ENCODE measurements at regions of chr4 and their contacts with region 1.

Region 1: GRCh38 chr4:74228691-74229640 is 71.0 kb downstream of the MTHFD2L start:
- DNase-seq: peak; percentile 97
- ATAC-seq: peak; percentile 51
- H3K4me3 ChIP-seq: no peak overlapping the region
- H3K27ac ChIP-seq: peak overlapping the region; percentile 92
- H3K4me1 ChIP-seq: peaks cover 52% of the 10 kb centered on the region
- H3K27me3 ChIP-seq: no peaks in the 10 kb centered on the region
- CTCF ChIP-seq: peak; percentile 99

Region 2: DNA sequence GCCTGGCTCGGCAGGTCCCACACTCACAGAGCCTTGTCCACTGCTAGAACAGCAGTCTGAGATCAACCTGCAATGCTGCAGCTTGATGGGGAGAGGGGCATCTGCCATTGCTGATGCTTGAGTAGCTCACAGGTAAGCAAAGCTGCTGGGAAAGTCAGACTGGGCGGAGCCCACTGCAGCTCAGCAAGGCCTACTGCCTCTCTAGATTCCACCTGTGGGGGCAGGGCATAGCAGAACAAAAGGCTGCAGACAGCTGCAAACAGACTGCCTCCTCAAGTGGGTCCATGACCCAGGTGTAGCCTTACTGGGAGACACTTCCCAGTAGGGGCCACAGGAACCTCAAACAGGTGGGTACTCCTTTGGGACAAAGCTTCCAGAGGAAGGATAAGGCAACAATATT is 1549.3 kb before region 1 on chr4:
- CTCF ChIA-PET with region 1: no interaction called
- POLR2A ChIA-PET with region 1: no interaction called
- intact Hi-C with region 1: no loop called
- DNase-seq: no peak
- ATAC-seq: no peak
- H3K4me3 ChIP-seq: no peak overlapping the region
- H3K27ac ChIP-seq: no peak overlapping the region
- H3K4me1 ChIP-seq: no peaks in the 10 kb centered on the region
- H3K27me3 ChIP-seq: 0 out of 2 replicates have a peak, but pooled peaks cover 8% of the 10 kb centered on the region
- CTCF ChIP-seq: no peak

Region 3: GRCh38 chr4:74189331-74190043 is 39.5 kb before region 1 on chr4:
- CTCF ChIA-PET with region 1: no interaction called
- POLR2A ChIA-PET with region 1: no interaction called
- intact Hi-C with region 1: loop called (anchors 1 kb)
- DNase-seq: peak; percentile 79
- ATAC-seq: peak; percentile 65
- H3K4me3 ChIP-seq: no peak overlapping the region
- H3K27ac ChIP-seq: peak overlapping the region; percentile 17
- H3K4me1 ChIP-seq: peaks cover 19% of the 10 kb centered on the region
- H3K27me3 ChIP-seq: no peaks in the 10 kb centered on the region
- CTCF ChIP-seq: peak; percentile 91

Region 4: DNA sequence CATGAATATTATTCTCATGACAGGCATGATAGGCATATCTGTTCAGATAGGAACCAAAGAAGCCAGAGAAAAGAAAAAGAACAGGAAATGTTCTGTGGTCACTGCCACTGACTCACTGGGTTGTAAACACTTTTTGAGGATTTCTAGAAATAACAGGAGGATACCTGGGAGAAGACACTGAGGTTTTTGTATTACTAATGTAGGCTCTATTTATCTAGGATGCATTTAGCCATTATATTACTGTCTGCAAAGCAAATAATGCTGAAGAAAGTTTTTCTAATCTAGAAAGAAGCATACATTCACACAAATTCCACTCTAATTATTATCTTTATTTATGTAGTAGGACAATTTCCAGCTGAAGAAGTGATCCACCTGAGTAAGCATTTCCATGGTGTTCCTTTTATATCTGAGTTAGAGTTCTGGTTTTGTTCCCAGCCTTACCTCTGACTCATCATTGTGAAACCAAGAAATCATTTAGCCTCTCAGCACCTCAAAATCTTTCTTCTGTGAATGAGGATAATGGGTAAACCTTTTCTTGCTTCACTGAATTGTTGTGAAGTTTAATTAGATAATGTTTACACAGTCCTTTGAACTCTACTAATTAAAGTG is 39.1 kb after region 1 on chr4:
- CTCF ChIA-PET with region 1: interaction called, 3 read pairs
- POLR2A ChIA-PET with region 1: no interaction called
- intact Hi-C with region 1: loop called (anchors 1 kb)
- DNase-seq: peak; percentile 94
- ATAC-seq: peak; percentile 94
- H3K4me3 ChIP-seq: peak overlapping the region; percentile 14; the same call in 1 of the 2 replicates
- H3K27ac ChIP-seq: peak overlapping the region; percentile 95
- H3K4me1 ChIP-seq: peaks cover 42% of the 10 kb centered on the region
- H3K27me3 ChIP-seq: no peaks in the 10 kb centered on the region
- CTCF ChIP-seq: no peak

Region 5: GRCh38 chr4:74311696-74312313 is 82.8 kb after region 1 on chr4:
- CTCF ChIA-PET with region 1: interaction called, 8 read pairs
- POLR2A ChIA-PET with region 1: interaction called, 5 read pairs
- intact Hi-C with region 1: loop called (anchors 1 kb)
- DNase-seq: peak; percentile 91
- ATAC-seq: peak; percentile 57
- H3K4me3 ChIP-seq: peak overlapping the region; percentile 69
- H3K27ac ChIP-seq: no peak overlapping the region
- H3K4me1 ChIP-seq: peaks cover 34% of the 10 kb centered on the region
- H3K27me3 ChIP-seq: no peaks in the 10 kb centered on the region
- CTCF ChIP-seq: peak; percentile 93